ENCODE measurements at regions of chr17 and their contacts with region 1.

Region 1: DNA sequence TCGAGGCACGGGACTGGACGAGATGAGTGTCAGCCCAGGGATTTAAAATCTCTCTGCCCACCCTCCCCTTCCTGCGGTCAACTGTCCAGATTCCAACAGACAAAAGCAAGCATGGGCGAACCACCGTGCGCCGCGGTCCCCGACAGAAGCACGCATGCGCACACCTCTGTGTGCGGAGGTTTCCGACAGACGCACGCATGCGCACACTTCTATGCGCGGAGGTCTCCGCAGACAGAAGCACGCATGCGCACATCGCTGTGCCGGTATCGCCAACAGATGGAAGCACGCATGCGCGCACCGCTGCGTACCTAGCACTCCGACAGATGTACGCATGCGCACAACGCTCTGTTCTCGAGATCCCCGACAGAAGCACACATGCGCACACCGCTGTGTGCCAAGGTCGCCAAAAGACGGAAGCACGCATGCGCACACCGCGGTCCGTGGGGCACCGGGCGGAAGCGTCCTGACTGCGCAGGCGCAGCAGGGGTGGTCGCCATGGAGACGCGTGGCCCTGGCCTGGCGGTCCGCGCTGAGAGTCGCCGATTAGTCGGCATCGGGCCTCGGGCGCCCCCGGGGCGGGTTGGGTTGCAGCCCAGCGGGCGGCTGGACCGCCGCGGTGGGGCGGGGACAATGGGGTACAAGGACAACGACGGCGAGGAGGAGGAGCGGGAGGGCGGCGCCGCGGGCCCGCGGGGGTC is 57.4 kb upstream of the RPH3AL start:
- DNase-seq: peak; percentile 100
- H3K4me3 Mint-ChIP-seq: peak overlapping the region; percentile 76
- H3K27ac Mint-ChIP-seq: peak overlapping the region; percentile 89
- H3K4me1 Mint-ChIP-seq: peaks cover 66% of the 10 kb centered on the region
- H3K27me3 Mint-ChIP-seq: peaks cover 3% of the 10 kb centered on the region

Region 2: GRCh38 chr17:320809-321653 is 89.0 kb before region 1 on chr17:
- CTCF ChIA-PET with region 1: no interaction called
- intact Hi-C with region 1: no loop called
- DNase-seq: no peak
- H3K4me3 Mint-ChIP-seq: no peak overlapping the region
- H3K27ac Mint-ChIP-seq: no peak overlapping the region
- H3K4me1 Mint-ChIP-seq: no peaks in the 10 kb centered on the region
- H3K27me3 Mint-ChIP-seq: no peaks in the 10 kb centered on the region

Region 3: GRCh38 chr17:444879-445454 is 35.0 kb after region 1 on chr17:
- CTCF ChIA-PET with region 1: interaction called, 10 read pairs
- intact Hi-C with region 1: no loop called
- DNase-seq: no peak
- H3K4me3 Mint-ChIP-seq: no peak overlapping the region
- H3K27ac Mint-ChIP-seq: peak overlapping the region; percentile 80
- H3K4me1 Mint-ChIP-seq: peaks cover 22% of the 10 kb centered on the region
- H3K27me3 Mint-ChIP-seq: no peaks in the 10 kb centered on the region

Region 4: DNA sequence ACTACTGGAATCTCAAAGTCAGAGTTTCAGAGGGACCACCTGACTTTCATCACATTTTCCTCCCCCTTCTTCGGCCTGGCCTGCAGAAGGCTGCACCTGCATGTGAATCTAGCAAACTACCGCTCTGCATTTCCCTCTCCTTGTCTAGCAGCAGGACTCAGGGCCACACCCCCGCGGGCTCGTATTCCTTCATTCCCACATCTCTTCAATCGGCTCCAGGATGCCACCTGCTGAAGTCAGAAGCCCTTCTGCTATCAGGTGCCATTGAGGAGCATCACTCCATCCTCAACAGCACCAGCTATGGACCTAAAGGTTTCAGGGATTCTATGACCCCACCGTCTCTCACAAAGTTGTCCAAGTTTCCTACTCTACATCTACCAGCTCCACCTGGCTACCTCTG is 135.2 kb after region 1 on chr17:
- CTCF ChIA-PET with region 1: interaction called, 12 read pairs
- intact Hi-C with region 1: no loop called
- DNase-seq: no peak
- H3K4me3 Mint-ChIP-seq: no peak overlapping the region
- H3K27ac Mint-ChIP-seq: no peak overlapping the region
- H3K4me1 Mint-ChIP-seq: peaks cover 6% of the 10 kb centered on the region
- H3K27me3 Mint-ChIP-seq: no peaks in the 10 kb centered on the region

Region 5: GRCh38 chr17:688100-688989 is 278.3 kb after region 1 on chr17:
- CTCF ChIA-PET with region 1: interaction called, 5 read pairs
- intact Hi-C with region 1: loop called (anchors 1 kb)
- DNase-seq: peak; percentile 22
- H3K4me3 Mint-ChIP-seq: no peak overlapping the region
- H3K27ac Mint-ChIP-seq: no peak overlapping the region
- H3K4me1 Mint-ChIP-seq: peaks cover 5% of the 10 kb centered on the region
- H3K27me3 Mint-ChIP-seq: no peaks in the 10 kb centered on the region

Region 6: DNA sequence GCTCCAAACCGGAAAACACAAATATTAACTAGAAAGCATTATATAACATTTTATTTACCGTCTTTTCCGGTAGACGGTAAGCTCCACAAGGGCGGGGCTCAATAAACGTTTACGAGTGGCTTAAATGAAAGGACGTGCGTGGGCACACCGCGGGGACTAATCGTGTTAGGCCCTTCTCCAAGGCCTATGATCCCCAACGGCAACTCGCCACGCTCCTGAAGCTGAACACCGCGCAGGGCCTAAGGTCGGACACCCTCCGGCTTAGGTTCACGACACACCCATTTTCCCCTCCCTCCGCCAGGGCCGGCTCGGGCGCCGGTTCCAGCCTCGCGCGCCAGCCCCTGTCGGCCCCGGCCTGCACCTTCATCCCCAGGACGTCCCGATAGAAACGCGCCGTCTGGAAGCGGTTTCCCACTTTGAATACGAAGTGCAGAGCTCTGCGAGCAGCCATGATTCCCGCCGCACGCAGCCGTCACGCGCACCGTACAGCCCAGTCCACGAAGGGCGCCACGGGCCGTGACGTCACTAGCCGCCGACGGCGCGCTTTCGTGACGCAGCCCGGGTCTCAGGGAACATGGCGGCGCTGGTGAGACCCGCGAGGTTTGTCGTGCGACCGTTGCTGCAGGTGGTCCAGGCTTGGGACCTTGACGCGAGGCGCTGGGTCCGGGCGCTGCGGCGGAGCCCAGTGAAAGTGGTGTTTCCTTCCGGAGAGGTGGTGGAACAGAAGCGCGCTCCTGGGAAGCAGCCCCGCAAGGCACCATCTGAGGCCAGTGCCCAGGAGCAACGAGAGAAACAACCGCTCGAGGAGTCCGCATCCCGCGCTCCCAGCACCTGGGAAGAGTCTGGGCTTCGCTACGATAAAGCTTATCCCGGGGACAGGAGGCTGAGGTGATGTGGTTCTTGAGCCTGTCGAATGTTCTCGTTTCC is 372.1 kb after region 1 on chr17 and contains the starts of genes GLOD4 and MRM3:
- CTCF ChIA-PET with region 1: no interaction called
- intact Hi-C with region 1: loop called (anchors 2 kb)
- DNase-seq: peak; percentile 95
- H3K4me3 Mint-ChIP-seq: peak within 1 kb of the TSS; percentile 89
- H3K27ac Mint-ChIP-seq: peak within 1 kb of the TSS; percentile 93
- H3K4me1 Mint-ChIP-seq: peaks cover 35% of the 10 kb centered on the region
- H3K27me3 Mint-ChIP-seq: no peaks in the 10 kb centered on the region
- total RNA-seq, gene GLOD4: 61.1 to 63.7 TPM
- total RNA-seq, gene MRM3: 22.8 to 25.6 TPM

Region 7: GRCh38 chr17:1724506-1725362 is 1314.7 kb after region 1 on chr17 and contains the start of gene WDR81:
- CTCF ChIA-PET with region 1: no interaction called
- intact Hi-C with region 1: no loop called
- DNase-seq: peak; percentile 91
- H3K4me3 Mint-ChIP-seq: peak within 1 kb of the TSS; percentile 69
- H3K27ac Mint-ChIP-seq: peak within 1 kb of the TSS; percentile 41
- H3K4me1 Mint-ChIP-seq: peaks cover 29% of the 10 kb centered on the region
- H3K27me3 Mint-ChIP-seq: no peaks in the 10 kb centered on the region
- total RNA-seq, gene WDR81: 2.9 to 3.7 TPM